Cardiac septum (tissue), 1 donor: ENCODE measurements at regions of chr4 and their contacts with region 1.

Region 1: GRCh38 chr4:153466081-153466948 is at the start of gene TMEM131L:
- DNase-seq: peak; percentile 91
- total RNA-seq, gene TMEM131L: 21.2 TPM

Region 2: DNA sequence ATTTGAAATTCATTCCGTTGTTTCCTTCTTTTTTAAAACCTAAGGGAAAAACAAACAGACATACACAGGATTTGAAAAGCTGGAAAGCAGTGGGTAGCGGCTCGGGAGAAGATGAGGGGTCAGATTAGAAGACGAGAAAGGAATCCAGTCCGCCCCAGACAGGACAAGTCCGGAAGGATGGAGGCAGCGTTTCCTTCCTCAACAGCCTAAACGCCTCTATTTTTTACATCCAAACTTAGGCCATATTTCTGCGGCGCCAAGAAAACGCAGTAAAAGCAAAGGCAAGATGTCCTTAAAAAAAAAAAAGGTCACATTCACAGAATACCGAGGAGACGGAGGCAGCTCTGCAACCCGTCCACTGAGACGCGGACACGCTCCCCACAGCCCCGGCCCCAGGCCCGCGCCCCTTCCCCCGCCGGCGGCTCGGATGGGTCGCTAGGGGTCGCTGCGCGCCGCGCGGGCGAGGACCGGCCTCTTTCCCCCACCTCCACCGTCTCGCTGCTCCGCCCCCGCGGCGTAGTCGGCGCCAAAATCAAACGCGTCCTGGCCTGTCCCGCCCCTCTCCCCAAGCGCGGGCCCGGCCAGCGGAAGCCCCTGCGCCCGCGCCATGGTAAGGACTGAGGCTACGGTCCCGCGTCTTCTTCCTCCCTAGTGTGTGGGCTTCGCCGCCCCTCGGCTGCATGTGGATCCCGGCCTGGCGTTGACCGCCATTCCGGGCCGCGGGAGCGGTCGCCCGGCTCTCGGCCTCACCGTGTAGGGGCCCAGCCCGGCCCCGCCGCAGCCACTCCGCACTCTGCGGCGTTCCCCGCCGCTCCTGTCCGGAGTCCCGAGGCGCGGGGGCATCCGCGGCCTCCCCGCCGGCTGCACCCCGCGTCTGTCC is 121.9 kb before region 1 on chr4 and contains the start of gene MND1:
- intact Hi-C with region 1: loop called (anchors 2 kb)
- DNase-seq: peak; percentile 93
- total RNA-seq, gene MND1: not detected

Region 3: DNA sequence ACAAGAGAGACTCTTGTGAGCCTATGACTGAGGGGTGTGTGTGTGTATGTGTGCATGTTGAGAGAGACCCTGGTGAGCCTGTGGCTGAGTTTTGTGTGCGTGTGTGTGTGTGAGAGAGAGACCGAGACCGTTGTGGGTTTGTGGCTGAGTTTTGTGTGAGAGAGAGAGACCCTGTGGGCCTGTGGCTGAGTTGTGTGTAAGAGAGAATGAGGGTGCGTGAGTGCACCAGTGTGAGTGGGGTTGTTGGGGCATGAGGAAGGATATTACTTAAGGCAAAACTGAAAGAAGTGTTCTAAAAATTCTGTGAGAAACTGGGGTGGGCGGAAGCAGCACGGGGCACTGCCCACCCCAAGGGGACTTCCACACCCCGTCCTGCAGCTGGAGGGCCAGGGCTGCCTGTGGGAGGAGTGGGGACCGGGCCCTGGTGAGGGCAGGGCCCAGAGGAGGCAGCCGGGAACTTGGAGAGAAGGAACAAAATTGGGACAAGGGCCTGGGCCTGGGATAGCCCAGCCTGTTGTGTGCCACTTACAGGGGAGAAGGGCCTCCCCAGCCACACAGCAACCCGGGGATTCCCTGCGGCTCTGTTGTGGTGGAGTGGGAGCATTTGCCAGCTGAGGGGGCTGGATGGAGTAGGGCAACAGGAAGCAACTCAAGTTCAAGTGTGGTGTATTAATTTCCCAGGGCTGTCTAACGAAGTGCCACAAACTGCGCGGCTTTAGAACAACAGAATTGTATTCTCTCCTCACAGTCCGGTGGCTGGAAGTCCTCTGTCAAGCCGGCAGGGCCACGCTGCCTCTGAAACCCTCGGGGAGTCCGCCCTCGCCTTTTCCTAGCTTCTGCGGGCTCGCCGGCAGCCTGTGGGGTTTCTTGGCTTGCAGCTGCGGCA is 21.9 kb after region 1 on chr4:
- intact Hi-C with region 1: loop called (anchors 2 kb)
- DNase-seq: peak; percentile 86

Region 4: GRCh38 chr4:153553819-153554170 is 87.5 kb after region 1 on chr4:
- intact Hi-C with region 1: loop called (anchors 5 kb)
- DNase-seq: no peak

Region 5: DNA sequence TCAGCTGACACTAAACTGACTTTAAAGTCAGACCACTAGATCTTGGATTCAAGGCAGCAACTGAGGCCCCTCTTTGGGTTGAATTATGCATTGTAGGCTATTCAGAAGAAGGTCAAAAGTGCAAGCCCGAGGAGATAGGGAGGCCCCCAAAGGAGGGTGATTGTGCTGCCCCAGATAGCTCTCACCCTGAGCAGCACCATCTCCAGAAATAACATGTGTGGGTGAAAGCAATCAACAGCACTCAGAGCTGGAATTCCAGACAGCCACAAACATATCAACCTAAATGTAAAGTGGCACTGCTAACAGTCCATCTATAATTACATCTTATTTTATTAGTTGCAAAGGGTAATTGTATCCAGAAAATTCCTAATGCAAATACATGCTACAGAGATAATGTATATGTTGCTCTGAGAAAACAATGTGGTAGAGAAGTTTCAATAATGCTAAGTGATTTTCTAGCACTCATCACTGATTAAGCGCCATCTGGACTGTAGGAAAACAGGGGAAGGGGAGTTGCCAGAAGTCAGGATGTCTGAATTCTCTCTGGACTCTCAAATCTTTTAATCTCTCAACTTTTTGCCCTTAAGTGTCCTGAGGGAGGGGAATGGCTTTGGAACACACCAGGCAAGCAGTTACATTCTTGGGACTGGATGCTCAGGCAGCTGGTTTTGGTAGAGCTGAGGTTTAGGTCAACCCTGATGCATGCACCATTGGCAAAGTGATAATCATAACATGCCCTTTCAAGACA is 384.4 kb after region 1 on chr4:
- intact Hi-C with region 1: no loop called
- DNase-seq: no peak